ENCODE measurements at regions of chr13 and their contacts with region 1.

Region 1: GRCh38 chr13:50801087-50801931 is 42.2 kb downstream of the DLEU7 start:
- DNase-seq: no peak

Region 2: DNA sequence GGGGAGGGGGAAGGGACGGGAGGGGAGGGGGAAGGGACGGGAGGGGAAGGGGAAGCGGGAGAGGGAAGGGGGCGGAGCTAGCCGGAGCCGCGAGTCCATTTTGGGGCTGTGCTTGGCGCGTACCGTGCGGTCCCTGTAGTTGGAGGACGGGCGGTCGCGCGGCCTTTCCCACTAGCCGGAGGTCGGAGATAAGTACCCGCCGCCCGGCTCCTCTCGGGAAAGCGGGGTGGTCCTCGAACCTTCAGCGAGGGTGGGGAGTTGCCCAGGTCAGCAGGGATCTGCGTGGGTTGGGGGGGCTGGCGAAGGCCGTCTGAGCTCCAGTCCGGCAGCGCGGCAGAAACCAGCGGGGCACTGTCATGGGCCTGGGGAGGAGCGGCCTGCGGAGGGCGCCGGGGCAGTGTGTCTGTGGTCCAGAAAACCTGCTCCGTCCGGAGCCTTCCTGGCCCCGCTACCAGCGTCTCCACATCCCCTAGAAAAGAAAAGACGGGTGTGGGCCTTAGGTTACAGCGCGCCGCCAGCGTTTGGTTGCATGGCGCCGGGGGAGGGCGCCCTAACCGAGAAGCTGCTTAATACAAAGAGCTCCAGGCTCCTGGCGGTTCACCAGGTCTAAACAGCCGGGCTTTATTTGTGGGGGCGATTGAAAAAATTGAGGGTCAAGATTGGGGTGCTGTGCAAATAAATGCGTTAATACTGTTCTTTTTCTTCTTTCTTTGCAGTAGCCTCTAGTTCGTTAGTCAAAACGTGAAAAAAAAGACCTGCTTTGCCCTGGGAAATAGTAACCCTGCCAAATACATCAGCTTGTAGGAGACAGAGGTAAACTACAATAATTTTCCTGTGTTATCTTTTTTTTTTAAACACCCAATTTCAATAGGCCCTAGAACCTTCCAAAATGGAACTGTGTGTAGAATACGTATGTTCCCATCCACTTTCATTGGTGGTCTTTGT is 804.1 kb before region 1 on chr13 and contains the start of gene TRIM13:
- intact Hi-C with region 1: loop called (anchors 5 kb)
- DNase-seq: peak; percentile 95
- total RNA-seq, gene TRIM13: 19.2 TPM

Region 3: GRCh38 chr13:50387051-50387581 is 414.2 kb before region 1 on chr13:
- intact Hi-C with region 1: loop called (anchors 5 kb)
- DNase-seq: peak; percentile 86

Region 4: GRCh38 chr13:50699874-50700663 is 101.2 kb before region 1 on chr13:
- intact Hi-C with region 1: loop called (anchors 5 kb)
- DNase-seq: no peak

Region 5: DNA sequence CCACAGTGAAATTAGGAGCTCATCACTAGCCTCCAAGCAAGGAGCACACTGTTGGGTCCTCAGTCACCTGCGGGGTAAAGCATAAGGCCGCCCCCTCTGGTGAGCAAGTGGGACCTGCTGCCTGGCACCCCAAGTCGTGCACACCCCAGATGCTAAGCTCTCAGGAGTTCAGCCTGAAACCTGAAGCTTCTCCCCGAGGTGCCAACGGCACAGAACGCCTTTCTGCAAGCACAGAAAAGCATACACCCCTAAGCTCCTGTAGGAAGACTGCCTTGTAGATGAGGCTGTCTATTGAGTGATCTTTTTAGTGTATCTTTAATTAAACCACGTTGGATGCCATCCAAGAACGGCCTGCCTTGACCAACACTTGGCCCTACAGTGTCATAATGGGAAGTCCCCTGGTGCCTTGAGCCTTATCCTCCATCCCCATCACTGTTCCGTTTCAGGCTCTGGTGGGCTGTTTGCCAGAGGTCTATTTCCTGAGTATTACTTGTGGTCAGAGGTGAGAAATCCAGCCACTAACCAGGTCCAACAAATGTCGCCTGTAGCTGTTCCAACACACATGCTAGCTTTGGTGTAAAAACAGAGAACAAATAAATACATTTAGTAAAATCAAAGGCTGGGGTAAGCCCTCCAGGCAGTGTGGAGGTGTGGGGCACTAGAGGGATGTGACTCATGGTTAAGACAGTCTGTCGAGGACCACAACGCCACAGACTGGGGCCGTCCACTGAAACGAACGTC is 265.0 kb after region 1 on chr13:
- intact Hi-C with region 1: loop called (anchors 10 kb)
- DNase-seq: no peak